ENCODE measurements at regions of chrX and their contacts with region 1.

Region 1: GRCh38 chrX:71579990-71580380 is 1.7 kb downstream of the GCNA start:
- DNase-seq: no peak
- H3K4me3 ChIP-seq: no peak overlapping the region
- H3K27ac ChIP-seq: no peak overlapping the region
- H3K4me1 ChIP-seq: no peaks in the 10 kb centered on the region
- H3K27me3 ChIP-seq: no peaks in the 10 kb centered on the region
- CTCF ChIP-seq: no peak
- EP300 ChIP-seq: no peak
- POLR2A ChIP-seq: no peak

Region 2: GRCh38 chrX:70422851-70423341 is 1157.1 kb before region 1 on chrX and contains the start of gene GDPD2:
- in situ Hi-C with region 1: no loop called
- intact Hi-C with region 1: no loop called
- DNase-seq: peak; percentile 38
- H3K4me3 ChIP-seq: peak within 1 kb of the TSS in 2 of 4 donors; percentile 14 to 36
- H3K27ac ChIP-seq: peak within 1 kb of the TSS in 1 of 4 donors; percentile 26
- H3K4me1 ChIP-seq: no peaks in the 10 kb centered on the region
- H3K27me3 ChIP-seq: no peaks in the 10 kb centered on the region
- CTCF ChIP-seq: peak in 4 of 5 experiments; percentile 17 to 46 (median 28)
- EP300 ChIP-seq: no peak
- POLR2A ChIP-seq: no peak
- total RNA-seq, gene GDPD2: 1.6 to 68.1 (median 31.2) TPM

Region 3: GRCh38 chrX:70433848-70434351 is 1146.1 kb before region 1 on chrX:
- in situ Hi-C with region 1: no loop called
- intact Hi-C with region 1: loop called (anchors 5 kb)
- DNase-seq: peak; percentile 83
- H3K4me3 ChIP-seq: peak overlapping the region; percentile 23 to 72 (median 50)
- H3K27ac ChIP-seq: peak overlapping the region; percentile 72 to 87 (median 83)
- H3K4me1 ChIP-seq: peaks cover 0 to 7% (median 4%) of the 10 kb centered on the region in 4 donors
- H3K27me3 ChIP-seq: no peaks in the 10 kb centered on the region
- CTCF ChIP-seq: peak; percentile 67 to 82 (median 72)
- EP300 ChIP-seq: no peak
- POLR2A ChIP-seq: peak; percentile 37

Region 4: DNA sequence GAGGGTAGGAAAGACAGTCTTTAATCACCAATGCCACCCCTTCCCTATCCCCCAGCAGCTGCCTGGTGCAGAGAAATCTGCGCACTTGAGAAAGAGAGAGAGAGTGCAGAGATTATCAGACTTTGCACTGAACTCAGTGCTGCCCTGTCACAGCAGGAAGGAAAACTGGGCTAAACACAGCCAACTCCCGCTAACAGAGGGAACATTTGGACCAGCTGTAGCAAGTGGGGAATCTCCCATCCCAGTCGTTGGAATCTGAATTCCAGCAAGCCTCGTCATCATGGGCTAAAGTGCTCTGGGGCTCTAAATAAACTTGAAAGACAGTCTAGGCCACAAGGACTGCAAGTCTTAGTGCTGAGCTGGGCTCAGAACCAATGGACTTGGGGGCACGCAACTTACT is 966.7 kb before region 1 on chrX:
- in situ Hi-C with region 1: no loop called
- intact Hi-C with region 1: no loop called
- DNase-seq: no peak
- H3K4me3 ChIP-seq: no peak overlapping the region
- H3K27ac ChIP-seq: peak overlapping the region in 1 of 4 donors; percentile 3
- H3K4me1 ChIP-seq: no peaks in the 10 kb centered on the region
- H3K27me3 ChIP-seq: no peaks in the 10 kb centered on the region
- CTCF ChIP-seq: no peak
- EP300 ChIP-seq: no peak
- POLR2A ChIP-seq: no peak

Region 5: DNA sequence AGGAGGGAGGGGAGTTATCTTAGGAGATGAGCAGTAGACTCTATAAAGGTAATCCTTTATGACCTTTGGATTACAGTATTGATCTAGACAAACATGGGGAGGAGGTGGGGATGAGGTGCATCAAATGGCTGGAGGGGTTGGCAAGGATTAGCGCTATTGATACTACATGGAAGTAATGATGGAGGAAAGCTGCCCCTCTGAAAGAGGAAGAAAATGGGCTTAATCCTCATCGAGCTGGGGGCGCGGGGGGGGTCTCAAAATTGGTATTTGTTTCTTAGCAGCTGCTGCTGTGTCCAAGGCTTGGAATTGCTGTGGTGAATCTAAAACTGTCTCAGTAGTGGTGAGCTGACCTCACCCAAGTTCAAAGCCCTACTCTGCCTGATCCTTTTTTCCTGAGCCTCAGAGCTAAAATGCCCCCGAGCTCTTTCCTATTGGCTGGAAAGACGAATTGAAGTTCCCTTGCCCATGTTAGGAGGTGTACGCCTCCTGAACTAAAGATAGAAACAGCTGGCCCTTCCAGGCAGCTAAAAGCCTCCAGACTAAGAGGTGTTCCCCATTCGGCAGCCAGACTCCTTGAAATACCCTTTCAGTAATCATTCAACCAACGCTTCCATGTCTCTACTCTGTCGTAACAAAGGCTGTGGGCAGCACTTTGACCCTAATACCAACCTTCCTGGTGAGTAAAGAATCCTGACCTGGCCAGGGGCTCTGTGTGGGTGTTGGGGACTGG is 278.6 kb before region 1 on chrX and contains the start of gene ITGB1BP2:
- in situ Hi-C with region 1: no loop called
- intact Hi-C with region 1: no loop called
- DNase-seq: no peak
- H3K4me3 ChIP-seq: no peak within 1 kb of the TSS
- H3K27ac ChIP-seq: peak within 1 kb of the TSS; percentile 29 to 60 (median 40)
- H3K4me1 ChIP-seq: no peaks in the 10 kb centered on the region
- H3K27me3 ChIP-seq: no peaks in the 10 kb centered on the region
- CTCF ChIP-seq: no peak
- EP300 ChIP-seq: no peak
- POLR2A ChIP-seq: no peak
- total RNA-seq, gene ITGB1BP2: 2.9 to 6.8 TPM in 2 of 4 donors, not detected in the others